AG04450 (cell line): ENCODE measurements at regions of chr7 and their contacts with region 1.

Region 1: GRCh38 chr7:47482013-47482875 is 99.7 kb downstream of the TNS3 start:
- DNase-seq: peak; percentile 89
- H3K4me3 ChIP-seq: peak overlapping the region; percentile 17; the same call in 1 of the 2 replicates
- H3K27ac ChIP-seq: peak overlapping the region; percentile 99
- H3K27me3 ChIP-seq: no peaks in the 10 kb centered on the region
- CTCF ChIP-seq: no peak

Region 2: DNA sequence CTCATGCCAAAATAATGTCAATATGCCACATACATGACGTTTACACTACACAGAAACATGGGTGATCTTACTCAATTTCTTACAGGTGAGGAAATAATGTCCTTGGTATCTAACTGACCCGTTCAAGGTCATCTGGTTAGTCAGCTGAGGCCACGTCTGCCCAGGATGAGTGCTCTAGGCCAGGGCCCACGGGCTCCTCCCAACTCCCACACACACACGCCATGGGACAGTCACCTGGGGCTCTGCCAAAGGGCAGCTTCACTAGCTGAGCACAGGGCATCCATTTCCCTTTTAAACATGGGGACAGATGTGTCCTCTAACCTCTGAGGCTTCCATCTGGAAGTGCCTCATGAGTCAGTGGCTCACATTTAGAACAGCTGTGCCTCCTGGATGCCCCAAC is 24.2 kb before region 1 on chr7:
- CTCF ChIA-PET with region 1: no interaction called
- POLR2A ChIA-PET with region 1: interaction called, 11 read pairs
- DNase-seq: peak; percentile 91
- H3K4me3 ChIP-seq: no peak overlapping the region
- H3K27ac ChIP-seq: peak overlapping the region; percentile 85
- H3K27me3 ChIP-seq: no peaks in the 10 kb centered on the region
- CTCF ChIP-seq: no peak

Region 3: DNA sequence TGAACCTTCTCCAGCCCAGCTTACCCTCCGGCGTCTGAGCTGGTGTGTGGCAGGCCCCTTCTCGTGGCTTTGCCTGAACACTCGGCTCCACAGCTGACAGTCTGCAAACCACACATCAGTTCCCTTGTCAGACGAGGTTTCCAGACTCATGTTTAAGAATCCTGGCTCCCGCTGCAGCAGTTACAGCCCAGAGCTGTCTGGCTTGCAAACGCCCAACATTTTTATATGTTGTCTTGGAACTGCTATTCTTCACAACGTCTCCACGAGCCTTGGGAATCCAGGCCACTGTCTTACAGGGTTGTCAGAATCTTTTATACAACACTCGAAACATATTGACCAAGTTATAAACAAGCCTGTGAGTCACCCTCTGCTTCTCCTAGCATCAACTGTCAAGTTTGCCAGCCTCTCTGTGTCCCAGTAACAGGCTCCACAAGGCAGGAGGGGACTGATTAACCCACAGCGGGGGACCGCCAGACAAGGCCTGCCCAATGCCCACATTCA is 31.5 kb after region 1 on chr7:
- CTCF ChIA-PET with region 1: no interaction called
- POLR2A ChIA-PET with region 1: interaction called, 39 read pairs
- DNase-seq: peak; percentile 94
- H3K4me3 ChIP-seq: peak overlapping the region; percentile 21; the same call in 1 of the 2 replicates
- H3K27ac ChIP-seq: peak overlapping the region; percentile 73
- H3K27me3 ChIP-seq: no peaks in the 10 kb centered on the region
- CTCF ChIP-seq: no peak